Heart left ventricle (tissue), 16 donors: ENCODE measurements at regions of chr12 and their contacts with region 1.

Region 1: DNA sequence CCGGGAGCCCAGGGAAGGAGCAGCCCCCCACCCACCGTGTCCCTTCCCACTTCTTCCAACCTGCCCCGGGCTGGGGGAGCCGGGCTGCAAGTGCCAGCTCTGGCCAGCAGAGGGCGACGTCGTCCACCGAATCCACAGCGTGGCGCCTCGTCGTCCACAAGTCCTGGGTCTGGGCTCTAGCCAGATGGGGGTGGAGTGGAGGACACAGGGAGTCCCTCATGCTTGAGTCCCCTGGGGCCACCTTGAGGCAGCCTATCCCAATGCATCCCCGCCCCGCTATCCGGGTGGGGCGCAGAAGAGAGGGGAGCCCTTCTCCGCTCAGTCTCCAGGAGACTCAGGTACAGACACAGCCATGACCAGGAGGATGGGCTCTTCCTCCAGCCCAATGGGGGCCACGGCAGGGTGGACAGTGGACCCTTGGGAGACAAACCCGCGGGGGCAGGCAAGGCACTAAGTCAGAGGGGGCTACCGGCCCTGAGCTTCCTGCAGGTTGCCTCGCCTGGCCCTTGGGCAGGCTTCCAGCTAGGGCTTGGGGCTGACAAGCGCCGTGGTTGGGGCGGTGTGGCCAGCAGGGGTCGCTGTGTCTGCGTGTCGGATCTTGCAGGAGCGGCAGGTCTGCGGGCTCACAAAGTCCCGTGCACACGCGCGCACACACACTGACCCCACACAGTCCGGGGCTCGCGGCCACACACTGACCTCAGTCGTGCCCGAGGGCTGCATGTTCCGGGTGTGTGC is 5.5 kb downstream of the AQP5 start:
- DNase-seq: peak; percentile 86 to 95 (median 90)
- ATAC-seq: peak; percentile 61 to 84 (median 78)
- H3K4me3 ChIP-seq: peak overlapping the region in 11 of 12 donors; percentile 6 to 50 (median 37)
- H3K27ac ChIP-seq: no peak overlapping the region
- H3K4me1 ChIP-seq: peaks cover 0 to 22% (median 12%) of the 10 kb centered on the region in 12 donors
- H3K27me3 ChIP-seq: peaks cover 0 to 44% (median 7%) of the 10 kb centered on the region in 9 donors
- CTCF ChIP-seq: peak; percentile 63 to 89 (median 76)
- POLR2A ChIP-seq: no peak

Region 2: GRCh38 chr12:49776413-49776812 is 190.8 kb before region 1 on chr12:
- intact Hi-C with region 1: loop called in 3 of 10 experiments (anchors 10 kb)
- DNase-seq: peak; percentile 52 to 79 (median 71)
- ATAC-seq: peak; percentile 61 to 94 (median 89)
- H3K4me3 ChIP-seq: no peak overlapping the region
- H3K27ac ChIP-seq: no peak overlapping the region
- H3K4me1 ChIP-seq: peaks cover 0 to 7% (median 0%) of the 10 kb centered on the region in 12 donors
- H3K27me3 ChIP-seq: no peaks in the 10 kb centered on the region
- CTCF ChIP-seq: peak; percentile 63 to 85 (median 80)
- POLR2A ChIP-seq: no peak

Region 3: GRCh38 chr12:50050410-50051098 is 83.3 kb after region 1 on chr12:
- intact Hi-C with region 1: loop called in 4 of 10 experiments (anchors 5 kb)
- DNase-seq: peak; percentile 44 to 78 (median 72)
- ATAC-seq: peak; percentile 40 to 87 (median 82)
- H3K4me3 ChIP-seq: peak overlapping the region in 10 of 12 donors; percentile 21 to 50 (median 38)
- H3K27ac ChIP-seq: peak overlapping the region in 5 of 12 donors; percentile 2 to 38 (median 10)
- H3K4me1 ChIP-seq: peaks cover 0 to 16% (median 4%) of the 10 kb centered on the region in 12 donors
- H3K27me3 ChIP-seq: peaks cover 0 to 8% (median 0%) of the 10 kb centered on the region in 9 donors
- CTCF ChIP-seq: no peak
- POLR2A ChIP-seq: no peak

Region 4: DNA sequence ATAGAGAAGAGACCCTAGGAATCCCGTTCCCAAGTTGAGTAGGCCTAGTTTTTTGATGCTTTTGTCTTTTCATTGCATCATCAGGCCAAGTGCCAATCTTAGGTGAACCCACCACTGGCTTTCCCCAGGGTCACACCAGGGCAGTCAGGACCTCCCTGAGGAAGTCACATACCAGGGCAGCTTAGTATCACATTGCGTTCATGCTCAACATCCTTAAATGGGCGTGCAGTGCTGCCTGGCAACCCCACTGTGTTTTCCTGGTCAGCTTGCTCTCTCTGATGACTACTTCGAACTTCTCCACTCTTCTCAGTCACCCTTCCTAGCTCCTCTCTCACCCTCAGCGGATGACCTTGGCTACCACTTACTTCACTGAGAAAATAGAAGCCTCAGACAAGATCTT is 99.2 kb after region 1 on chr12:
- intact Hi-C with region 1: loop called in 8 of 10 experiments (anchors 1 to 5 kb)
- DNase-seq: peak in 2 of 5 donors; percentile 35 to 42
- ATAC-seq: peak in 3 of 4 donors; percentile 43 to 61 (median 58)
- H3K4me3 ChIP-seq: no peak overlapping the region
- H3K27ac ChIP-seq: peak overlapping the region in 1 of 12 donors; percentile 34
- H3K4me1 ChIP-seq: peaks cover 0 to 13% (median 2%) of the 10 kb centered on the region in 12 donors
- H3K27me3 ChIP-seq: no peaks in the 10 kb centered on the region
- CTCF ChIP-seq: no peak
- POLR2A ChIP-seq: no peak

Region 5: DNA sequence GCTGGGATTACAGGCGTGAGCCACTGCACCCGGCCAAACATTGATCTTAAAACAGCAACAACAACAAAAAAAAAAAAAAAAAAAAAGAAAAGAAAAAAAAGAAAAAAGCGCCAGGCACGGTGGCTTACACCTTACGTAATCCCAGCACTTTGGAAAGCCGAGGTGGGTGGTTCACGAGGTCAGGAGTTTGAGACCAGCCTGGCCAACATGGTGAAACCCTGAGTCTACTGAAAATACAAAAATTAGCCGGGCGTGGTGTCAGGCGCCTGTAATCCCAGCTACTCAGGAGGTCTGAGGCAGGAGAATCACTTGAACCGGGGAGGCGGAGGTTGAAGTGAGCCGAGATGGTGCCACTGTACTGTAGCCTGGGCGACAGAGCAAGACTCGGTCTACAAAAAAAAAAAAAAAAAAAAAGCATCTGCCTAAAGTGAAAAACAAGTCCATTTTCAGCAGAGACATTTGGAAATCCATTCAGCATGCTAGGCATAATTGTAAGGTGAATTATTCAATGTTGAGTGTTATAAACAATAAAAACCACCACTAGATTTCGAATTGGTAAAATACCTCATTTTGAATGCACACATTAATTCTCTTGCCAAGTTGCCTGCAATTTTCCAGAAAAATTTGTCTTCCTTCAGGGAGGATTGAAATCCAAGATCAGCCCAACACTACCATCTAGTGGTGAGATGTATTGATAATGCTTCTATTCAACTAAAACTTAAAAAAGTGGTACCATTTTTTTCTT is 207.9 kb after region 1 on chr12:
- intact Hi-C with region 1: loop called in 2 of 10 experiments (anchors 10 kb)
- DNase-seq: peak in 1 of 5 donors; percentile 22
- ATAC-seq: peak in 1 of 4 donors; percentile 46
- H3K4me3 ChIP-seq: no peak overlapping the region
- H3K27ac ChIP-seq: no peak overlapping the region
- H3K4me1 ChIP-seq: no peaks in the 10 kb centered on the region
- H3K27me3 ChIP-seq: no peaks in the 10 kb centered on the region
- CTCF ChIP-seq: peak; percentile 56 to 83 (median 68)
- POLR2A ChIP-seq: no peak